CD14-positive monocyte (primary cell): ENCODE measurements at regions of chr9 and their contacts with region 1.

Region 1: DNA sequence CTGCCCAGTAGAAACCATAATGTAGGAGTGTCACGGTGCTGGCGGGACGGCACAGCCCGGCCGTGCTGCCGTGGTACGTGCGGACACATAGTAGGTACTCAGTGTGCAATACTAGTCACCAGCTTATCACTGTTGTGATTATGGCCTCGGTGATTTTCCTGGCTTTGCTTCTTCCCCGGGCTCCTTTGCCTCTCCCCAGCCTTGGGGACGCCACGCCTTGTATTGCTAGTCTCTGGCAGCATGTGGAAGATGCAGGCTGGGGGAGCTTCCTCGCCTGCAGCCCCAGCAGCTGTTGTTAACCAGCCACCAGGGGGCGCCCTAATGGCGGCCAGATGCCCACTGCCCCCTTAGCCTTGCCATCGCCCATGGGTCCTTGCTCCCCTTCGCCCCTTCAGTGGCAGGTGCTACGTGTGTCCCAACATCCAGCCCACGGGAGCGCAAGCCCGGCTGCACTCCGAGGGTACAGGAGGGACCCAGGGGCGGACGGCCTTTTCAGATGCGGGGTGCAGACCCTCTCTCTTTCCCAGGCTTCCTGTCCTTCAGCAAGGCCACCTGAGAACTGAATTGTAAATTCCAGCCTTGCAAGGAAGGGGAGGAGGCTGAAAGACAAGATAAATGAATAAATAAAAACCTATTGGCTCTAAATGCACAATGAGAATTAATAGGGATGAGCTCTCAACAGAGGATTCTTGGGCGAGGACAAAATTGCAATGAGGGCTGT is 8.0 kb downstream of the NTNG2 start:
- DNase-seq: peak; percentile 53 to 64 (median 62)
- H3K4me3 ChIP-seq: no peak overlapping the region
- H3K4me3 Mint-ChIP-seq: no peak overlapping the region
- H3K27ac ChIP-seq: no peak overlapping the region
- H3K27ac Mint-ChIP-seq: no peak overlapping the region
- H3K4me1 ChIP-seq: no peaks in the 10 kb centered on the region
- H3K4me1 Mint-ChIP-seq: peaks cover under 1% of the 10 kb centered on the region
- H3K27me3 ChIP-seq: peaks cover 16 to 28% of the 10 kb centered on the region in 2 donors
- H3K27me3 Mint-ChIP-seq: peaks cover 31 to 44% (median 35%) of the 10 kb centered on the region in 3 donors
- CTCF ChIP-seq: peak; percentile 97

Region 2: DNA sequence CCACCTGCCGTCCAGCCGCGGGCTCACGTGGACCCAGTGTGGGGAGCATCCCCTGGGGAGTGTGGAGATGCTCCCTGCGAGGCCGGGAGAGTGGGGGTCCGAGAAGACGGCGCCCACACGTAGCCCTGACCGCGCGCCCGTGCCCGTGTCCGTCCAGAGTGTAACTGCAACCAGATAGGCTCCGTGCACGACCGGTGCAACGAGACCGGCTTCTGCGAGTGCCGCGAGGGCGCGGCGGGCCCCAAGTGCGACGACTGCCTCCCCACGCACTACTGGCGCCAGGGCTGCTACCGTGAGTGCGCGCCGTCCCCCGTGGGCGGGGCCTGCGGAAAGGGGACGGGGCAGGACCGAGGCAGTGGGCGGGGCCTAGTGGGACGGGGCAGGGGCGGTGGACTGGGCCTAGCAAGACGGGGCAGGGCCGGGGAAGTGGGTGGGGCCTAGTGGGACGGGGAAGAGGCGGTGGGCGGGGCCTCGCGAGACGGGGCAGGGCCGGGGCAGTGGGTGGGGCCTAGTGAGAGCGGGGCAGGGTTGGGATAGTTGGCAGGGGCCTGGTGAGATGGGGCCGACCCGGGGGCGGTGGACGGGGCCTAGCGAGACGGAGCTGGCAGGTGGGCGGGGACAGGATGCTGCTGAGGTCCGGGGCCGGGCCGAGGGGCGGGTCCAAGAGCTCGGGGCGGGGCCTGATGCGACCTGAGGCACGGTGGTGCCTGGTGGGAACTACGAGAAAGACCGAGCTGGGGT is 71.1 kb after region 1 on chr9:
- intact Hi-C with region 1: loop called (anchors 1 to 2 kb)
- DNase-seq: peak; percentile 93 to 98 (median 97)
- H3K4me3 ChIP-seq: peak overlapping the region; percentile 63 to 84 (median 74)
- H3K4me3 Mint-ChIP-seq: peak overlapping the region; percentile 97 to 99
- H3K27ac ChIP-seq: peak overlapping the region in 1 of 2 donors; percentile 45
- H3K27ac Mint-ChIP-seq: peak overlapping the region; percentile 82 to 95 (median 91)
- H3K4me1 ChIP-seq: peaks cover 34 to 50% of the 10 kb centered on the region in 2 donors
- H3K4me1 Mint-ChIP-seq: peaks cover 35% of the 10 kb centered on the region
- H3K27me3 ChIP-seq: peaks cover 2 to 31% of the 10 kb centered on the region in 2 donors
- H3K27me3 Mint-ChIP-seq: peaks cover 10 to 53% (median 45%) of the 10 kb centered on the region in 3 donors
- CTCF ChIP-seq: no peak